HepG2 (cell line): ENCODE measurements at regions of chr6 and their contacts with region 1.

Region 1: DNA sequence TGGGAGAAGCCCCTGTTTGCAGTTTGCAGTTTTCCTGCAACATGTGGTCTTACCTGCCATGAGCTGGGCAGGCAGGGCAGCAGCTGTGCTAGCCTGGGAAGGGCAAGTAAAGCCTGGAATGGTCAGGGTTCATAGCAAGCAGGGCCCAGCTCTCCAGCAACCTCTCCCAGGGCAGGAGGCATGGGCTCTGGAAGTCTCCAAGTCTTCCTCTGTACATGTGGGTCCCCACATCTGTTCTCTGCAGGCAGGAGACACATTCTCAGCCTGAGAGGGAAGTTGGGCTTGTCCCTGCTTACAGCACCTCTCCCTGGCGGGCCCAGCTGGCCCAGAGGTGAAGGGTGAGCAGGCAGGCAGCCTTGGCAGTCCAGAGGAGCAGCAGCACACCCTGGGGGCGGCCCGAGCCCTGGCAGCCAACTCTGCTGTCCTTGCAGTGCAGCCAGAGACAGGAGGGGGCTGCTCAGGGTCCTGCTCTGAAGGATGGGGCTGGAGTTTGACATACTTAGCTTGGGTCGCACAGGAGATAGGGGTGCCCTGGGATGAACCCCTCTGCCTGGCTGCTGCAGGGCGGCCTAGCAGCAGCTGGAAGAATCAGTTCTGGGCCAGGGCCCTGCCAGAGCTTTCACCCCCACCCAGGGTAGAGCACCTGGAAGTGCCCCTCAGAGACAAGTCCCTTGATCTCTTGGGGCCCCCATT is 176.0 kb downstream of the MRPL14 start:
- DNase-seq: peak; percentile 73
- ATAC-seq: peak; percentile 95
- H3K4me3 ChIP-seq: peak overlapping the region in 1 of 3 experiments; percentile 20; a peak in 1 of 6 replicates
- H3K27ac ChIP-seq: no peak overlapping the region
- H3K4me1 ChIP-seq: peaks cover 71% of the 10 kb centered on the region
- H3K27me3 ChIP-seq: peaks cover 0 to 2% of the 10 kb centered on the region in 2 experiments; a peak in 1 of 5 replicates
- CTCF ChIP-seq: peak; percentile 100
- EP300 ChIP-seq: peak in 1 of 2 experiments; percentile 32; a peak in 1 of 4 replicates
- POLR2A ChIP-seq: no peak
- RAD21 ChIP-seq: peak; percentile 100

Region 2: DNA sequence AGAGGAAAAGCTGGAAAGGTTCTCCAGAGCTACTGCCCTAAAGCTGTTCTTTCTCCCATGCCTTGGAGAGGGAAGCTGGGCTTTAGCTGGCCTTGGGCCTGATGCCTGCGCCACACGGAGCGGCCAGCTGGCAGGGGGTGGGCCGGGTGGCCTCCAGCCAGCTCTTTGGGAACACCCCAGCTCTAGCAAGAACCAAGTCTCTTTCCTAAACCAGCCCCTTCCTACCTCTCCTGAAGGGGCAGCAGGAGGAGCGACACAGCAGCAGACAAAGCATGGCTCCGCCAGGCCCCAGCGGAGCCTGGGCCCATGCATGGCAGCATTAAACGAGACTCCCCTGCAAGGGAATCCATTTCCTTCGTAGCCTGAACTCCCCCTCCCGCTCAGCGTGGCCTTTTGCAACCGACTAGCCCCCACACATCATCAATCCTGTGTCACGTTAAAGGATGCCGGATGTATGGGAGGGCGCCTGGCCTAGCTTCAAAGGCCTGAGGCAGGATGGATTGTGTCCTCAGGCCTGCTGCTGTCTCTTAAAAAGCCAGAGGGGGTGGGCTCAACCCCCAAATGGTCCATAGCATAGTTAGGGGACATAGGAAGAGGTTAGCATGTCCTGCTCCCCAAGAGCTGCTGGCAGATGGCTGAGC is 277.6 kb before region 1 on chr6:
- CTCF ChIA-PET with region 1: no interaction called
- POLR2A ChIA-PET with region 1: no interaction called
- in situ Hi-C with region 1: no loop called
- intact Hi-C with region 1: no loop called
- DNase-seq: no peak
- ATAC-seq: no peak
- H3K4me3 ChIP-seq: no peak overlapping the region
- H3K27ac ChIP-seq: peak overlapping the region; percentile 39
- H3K4me1 ChIP-seq: peaks cover 54% of the 10 kb centered on the region
- H3K27me3 ChIP-seq: no peaks in the 10 kb centered on the region
- CTCF ChIP-seq: no peak
- EP300 ChIP-seq: no peak
- POLR2A ChIP-seq: no peak
- RAD21 ChIP-seq: no peak

Region 3: GRCh38 chr6:43723737-43724295 is 227.4 kb before region 1 on chr6:
- CTCF ChIA-PET with region 1: interaction called, 23 read pairs
- POLR2A ChIA-PET with region 1: interaction called, 4 read pairs
- in situ Hi-C with region 1: loop called (anchors 5 kb)
- intact Hi-C with region 1: loop called (anchors 1 kb)
- DNase-seq: peak; percentile 84
- ATAC-seq: peak; percentile 91
- H3K4me3 ChIP-seq: no peak overlapping the region; a peak in 1 of 6 replicates
- H3K27ac ChIP-seq: no peak overlapping the region
- H3K4me1 ChIP-seq: peaks cover 50% of the 10 kb centered on the region
- H3K27me3 ChIP-seq: peaks cover 0 to 5% of the 10 kb centered on the region in 2 experiments; a peak in 2 of 5 replicates
- CTCF ChIP-seq: peak; percentile 98
- EP300 ChIP-seq: no peak
- POLR2A ChIP-seq: no peak
- RAD21 ChIP-seq: peak; percentile 95

Region 4: DNA sequence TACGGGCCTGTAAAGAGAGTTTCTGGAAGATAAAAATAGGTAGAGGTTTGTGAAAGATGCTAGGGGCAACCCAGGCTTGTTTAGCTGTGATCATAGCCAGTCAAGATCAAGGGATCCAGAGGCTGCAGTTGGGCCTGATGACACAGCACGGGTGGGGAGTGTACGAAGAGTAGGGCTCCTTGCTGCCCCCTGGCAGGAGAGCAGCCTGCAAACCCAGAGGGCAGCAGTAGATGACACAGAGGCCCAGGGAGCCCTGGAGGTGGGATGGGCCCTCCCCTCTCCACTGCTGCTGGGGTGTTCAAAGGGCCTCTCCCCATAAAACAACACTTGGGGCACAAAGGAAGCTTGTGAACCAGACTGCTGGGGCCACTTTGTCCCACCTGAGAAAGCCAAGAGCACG is 134.0 kb before region 1 on chr6:
- CTCF ChIA-PET with region 1: interaction called, 3 read pairs
- POLR2A ChIA-PET with region 1: no interaction called
- in situ Hi-C with region 1: no loop called
- intact Hi-C with region 1: loop called (anchors 1 kb)
- DNase-seq: peak; percentile 72
- ATAC-seq: peak; percentile 99
- H3K4me3 ChIP-seq: no peak overlapping the region
- H3K27ac ChIP-seq: no peak overlapping the region
- H3K4me1 ChIP-seq: peaks cover 46% of the 10 kb centered on the region
- H3K27me3 ChIP-seq: peaks cover 0 to 3% of the 10 kb centered on the region in 2 experiments; a peak in 2 of 5 replicates
- CTCF ChIP-seq: peak; percentile 92
- EP300 ChIP-seq: no peak
- POLR2A ChIP-seq: no peak
- RAD21 ChIP-seq: peak; percentile 86

Region 5: DNA sequence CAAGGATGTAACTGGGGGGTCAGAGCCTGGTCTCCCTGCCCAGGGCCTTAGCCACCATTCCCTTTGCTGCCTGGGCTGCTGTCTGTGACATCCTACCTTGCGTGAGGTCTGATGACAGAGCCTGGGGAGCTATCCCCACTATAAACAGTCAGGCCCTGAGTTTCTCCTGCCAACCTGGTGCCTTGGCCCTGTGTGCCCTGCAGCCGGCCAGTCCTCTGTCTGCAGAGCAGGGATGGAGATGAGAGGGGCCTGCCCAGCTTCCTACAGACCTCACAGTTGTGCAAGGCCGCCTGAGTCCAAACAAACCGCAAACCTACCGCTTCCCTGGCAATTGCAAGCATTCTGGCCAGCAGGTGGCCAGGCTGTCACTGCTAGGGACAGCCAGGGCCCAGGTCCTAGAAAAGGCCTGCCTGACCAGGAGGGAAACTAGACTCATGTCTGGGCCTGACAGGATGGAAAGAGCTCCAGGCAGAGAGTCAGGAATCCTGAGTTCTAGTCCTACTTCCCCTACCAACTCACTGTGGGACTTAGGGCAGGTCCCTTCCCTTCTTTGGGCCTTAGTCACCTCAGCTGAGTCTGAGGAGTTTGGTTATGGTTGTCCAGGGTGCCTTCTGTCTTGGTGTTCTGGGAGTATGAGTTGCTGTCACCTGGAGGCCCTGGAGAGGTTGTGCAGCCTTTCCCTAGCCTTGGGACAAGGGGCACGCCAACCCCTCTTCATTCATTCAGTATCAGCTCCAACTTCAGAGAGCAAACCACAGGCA is 95.0 kb before region 1 on chr6:
- CTCF ChIA-PET with region 1: interaction called, 44 read pairs
- POLR2A ChIA-PET with region 1: interaction called, 6 read pairs
- in situ Hi-C with region 1: loop called (anchors 5 kb)
- intact Hi-C with region 1: loop called (anchors 1 kb)
- DNase-seq: peak; percentile 86
- ATAC-seq: peak; percentile 91
- H3K4me3 ChIP-seq: no peak overlapping the region
- H3K27ac ChIP-seq: no peak overlapping the region
- H3K4me1 ChIP-seq: peaks cover 85% of the 10 kb centered on the region
- H3K27me3 ChIP-seq: peaks cover 3 to 4% of the 10 kb centered on the region in 2 experiments; a peak in 1 of 5 replicates
- CTCF ChIP-seq: peak; percentile 99
- EP300 ChIP-seq: peak in 1 of 2 experiments; percentile 20; a peak in 1 of 4 replicates
- POLR2A ChIP-seq: no peak
- RAD21 ChIP-seq: peak; percentile 96

Region 6: DNA sequence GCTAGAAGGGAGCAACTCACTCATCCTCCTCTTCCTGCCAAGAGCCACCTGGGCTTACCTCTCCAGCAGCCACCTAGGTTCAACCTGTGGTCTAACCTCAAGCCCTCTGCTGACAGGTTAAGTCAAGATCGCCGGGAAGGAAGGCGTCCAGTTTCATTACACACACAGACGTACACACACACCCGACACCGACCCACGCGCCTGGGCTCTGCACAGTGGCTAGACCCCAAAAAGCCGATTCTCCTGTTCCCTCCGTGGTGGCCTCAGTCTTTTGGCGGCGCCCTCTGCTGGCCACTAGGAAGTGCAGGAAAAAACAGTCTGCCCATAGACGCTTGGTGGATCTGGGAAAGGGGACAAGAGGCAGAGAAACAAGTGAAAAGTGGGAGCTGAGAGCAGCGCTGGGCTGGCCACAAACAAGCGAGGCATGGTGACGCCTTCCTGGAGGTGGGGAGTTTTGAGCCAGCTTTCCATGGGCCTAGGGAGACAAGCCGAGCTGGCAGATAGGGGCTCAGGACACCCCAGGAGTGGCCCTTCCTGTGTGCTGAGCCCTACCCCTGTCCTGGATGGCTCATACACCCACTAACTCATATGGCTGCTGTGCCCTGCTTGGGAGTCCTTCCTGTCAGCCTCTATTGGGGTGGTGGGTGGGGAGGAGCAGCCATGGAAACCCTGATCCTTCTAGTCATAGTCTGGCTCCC is 123.4 kb after region 1 on chr6:
- CTCF ChIA-PET with region 1: interaction called, 19 read pairs
- POLR2A ChIA-PET with region 1: interaction called, 4 read pairs
- in situ Hi-C with region 1: loop called (anchors 10 kb)
- intact Hi-C with region 1: loop called (anchors 1 kb)
- DNase-seq: peak; percentile 78
- ATAC-seq: peak; percentile 64
- H3K4me3 ChIP-seq: peak overlapping the region; percentile 23 to 74 (median 46)
- H3K27ac ChIP-seq: peak overlapping the region; percentile 57
- H3K4me1 ChIP-seq: peaks cover 85% of the 10 kb centered on the region
- H3K27me3 ChIP-seq: no peaks in the 10 kb centered on the region
- CTCF ChIP-seq: peak; percentile 99
- EP300 ChIP-seq: no peak
- POLR2A ChIP-seq: no peak
- RAD21 ChIP-seq: peak; percentile 85